Activated B cell treated with CpG ODN at 0.5 μM for 24 hours (primary cell): ENCODE measurements at regions of chr5 and their contacts with region 1.

Region 1: DNA sequence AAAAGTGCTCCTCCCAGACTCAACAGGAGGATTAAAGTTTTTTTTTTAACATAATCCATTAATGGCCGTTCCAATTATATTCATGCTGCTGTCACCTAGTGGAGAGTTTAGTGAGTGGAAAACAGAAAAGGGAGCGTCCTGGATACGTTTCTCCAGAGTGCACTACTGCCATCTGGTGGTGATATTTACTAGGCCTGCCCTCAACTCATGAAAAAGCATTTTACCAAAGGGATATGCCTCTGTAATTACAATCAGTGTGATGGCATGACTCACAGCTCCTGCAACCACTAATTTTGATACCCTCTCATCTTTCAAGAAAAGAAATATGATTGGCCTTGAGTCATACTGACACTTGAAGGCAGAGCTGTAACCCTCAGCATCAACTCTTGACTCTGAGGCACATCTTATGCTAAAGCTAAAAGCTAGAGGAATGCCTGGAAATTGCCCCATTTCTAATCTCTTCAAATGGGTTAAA is 20.0 kb downstream of the MINAR2 start:
- DNase-seq: no peak
- ATAC-seq: peak; percentile 64
- H3K4me3 Mint-ChIP-seq: no peak overlapping the region
- H3K27ac Mint-ChIP-seq: no peak overlapping the region
- H3K4me1 Mint-ChIP-seq: peaks cover 2% of the 10 kb centered on the region
- H3K27me3 Mint-ChIP-seq: peaks cover 2% of the 10 kb centered on the region
- CTCF ChIP-seq: peak; percentile 37

Region 2: DNA sequence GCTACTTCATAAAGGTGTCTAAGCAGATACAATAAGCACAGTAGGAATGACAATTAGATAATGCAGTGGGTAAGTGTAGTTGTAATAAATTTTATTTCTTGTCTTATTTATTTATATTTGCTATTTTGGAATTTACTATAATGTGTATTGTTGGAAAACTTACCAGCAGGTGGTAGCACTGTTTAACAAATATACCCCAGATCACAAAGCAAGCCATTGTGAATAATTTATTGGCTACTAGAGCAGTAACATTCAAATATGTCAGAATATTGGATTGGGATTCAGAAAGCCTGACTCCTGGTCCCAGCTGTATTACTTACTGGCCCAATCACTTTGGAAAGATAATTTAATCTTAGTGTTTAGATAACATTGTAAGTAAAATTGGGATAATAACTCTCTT is 595.4 kb before region 1 on chr5:
- CTCF ChIA-PET with region 1: no interaction called
- POLR2A ChIA-PET with region 1: no interaction called
- intact Hi-C with region 1: loop called (anchors 5 kb)
- DNase-seq: no peak
- ATAC-seq: no peak
- H3K4me3 Mint-ChIP-seq: no peak overlapping the region
- H3K27ac Mint-ChIP-seq: no peak overlapping the region
- H3K4me1 Mint-ChIP-seq: no peaks in the 10 kb centered on the region
- H3K27me3 Mint-ChIP-seq: no peaks in the 10 kb centered on the region
- CTCF ChIP-seq: no peak

Region 3: GRCh38 chr5:129664337-129664937 is 103.5 kb before region 1 on chr5:
- CTCF ChIA-PET with region 1: interaction called, 3 read pairs
- POLR2A ChIA-PET with region 1: no interaction called
- intact Hi-C with region 1: loop called (anchors 5 kb)
- DNase-seq: no peak
- ATAC-seq: no peak
- H3K4me3 Mint-ChIP-seq: no peak overlapping the region
- H3K27ac Mint-ChIP-seq: no peak overlapping the region
- H3K4me1 Mint-ChIP-seq: no peaks in the 10 kb centered on the region
- H3K27me3 Mint-ChIP-seq: no peaks in the 10 kb centered on the region
- CTCF ChIP-seq: no peak

Region 4: DNA sequence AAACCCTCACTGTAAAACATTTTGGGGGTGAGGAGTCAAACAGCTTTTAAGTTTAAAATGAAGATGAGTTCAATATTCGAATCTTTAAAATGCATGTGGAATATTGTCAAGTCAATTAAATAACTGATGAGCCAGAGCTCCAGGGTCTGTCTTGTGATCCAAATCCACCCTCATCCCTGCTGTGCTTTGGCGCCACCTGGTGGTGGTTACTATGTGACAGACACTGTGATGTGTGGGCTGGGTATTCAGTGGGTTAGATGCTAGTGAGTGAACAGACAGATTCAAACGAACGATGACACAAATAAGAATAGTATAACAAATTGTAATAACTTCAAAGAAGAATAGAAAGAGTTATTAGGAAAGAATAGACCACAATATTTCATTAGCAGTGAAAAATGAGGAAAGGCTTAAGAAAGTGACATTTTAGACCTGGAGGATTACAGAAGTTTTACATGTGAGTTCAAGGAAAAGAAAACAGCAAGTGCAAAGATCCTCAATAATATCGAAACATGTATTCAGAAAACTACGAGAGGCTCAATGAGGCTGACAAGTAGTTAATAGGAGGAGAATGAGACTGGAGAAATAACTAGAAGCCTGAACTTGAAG is 84.9 kb after region 1 on chr5:
- CTCF ChIA-PET with region 1: interaction called, 14 read pairs
- POLR2A ChIA-PET with region 1: no interaction called
- intact Hi-C with region 1: loop called (anchors 2 kb)
- DNase-seq: peak; percentile 28
- ATAC-seq: peak; percentile 61
- H3K4me3 Mint-ChIP-seq: no peak overlapping the region
- H3K27ac Mint-ChIP-seq: no peak overlapping the region
- H3K4me1 Mint-ChIP-seq: no peaks in the 10 kb centered on the region
- H3K27me3 Mint-ChIP-seq: peaks cover 4% of the 10 kb centered on the region
- CTCF ChIP-seq: peak; percentile 51

Region 5: DNA sequence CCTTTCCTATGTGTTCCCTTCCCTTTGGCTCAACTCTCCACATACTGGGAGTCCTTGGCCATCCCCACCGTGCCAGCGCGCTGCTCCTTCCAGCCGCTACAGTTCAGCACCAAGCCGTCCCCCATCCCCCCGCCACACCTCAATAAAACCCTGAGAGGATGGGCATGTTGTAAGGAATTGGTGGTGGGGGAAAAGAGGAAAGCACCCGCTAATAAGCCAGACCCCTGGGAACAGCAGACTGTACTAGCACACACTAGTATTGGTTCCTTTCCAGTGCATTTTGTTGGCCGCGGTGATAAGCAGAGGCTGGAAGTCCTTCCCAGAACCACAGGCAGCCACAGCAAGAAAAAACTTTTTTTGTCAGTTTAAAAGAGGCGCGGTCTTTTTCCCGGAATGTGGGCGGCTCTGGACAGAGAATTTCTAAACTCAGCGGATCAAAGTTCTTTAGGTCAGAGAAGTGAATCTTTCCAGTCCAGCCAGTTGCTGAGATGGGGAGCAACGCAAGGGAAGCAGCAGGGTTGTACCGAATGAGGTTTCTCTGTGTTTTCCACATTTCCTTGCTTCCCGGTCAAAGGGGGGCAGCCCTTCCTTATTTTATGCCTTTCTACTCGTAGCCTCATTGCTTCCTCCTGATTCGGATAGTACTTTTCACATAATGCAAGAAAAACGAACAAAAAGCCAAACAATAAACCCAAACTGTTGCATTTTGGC is 138.4 kb after region 1 on chr5:
- CTCF ChIA-PET with region 1: no interaction called
- POLR2A ChIA-PET with region 1: no interaction called
- intact Hi-C with region 1: no loop called
- DNase-seq: no peak
- ATAC-seq: no peak
- H3K4me3 Mint-ChIP-seq: peak overlapping the region; percentile 58
- H3K27ac Mint-ChIP-seq: no peak overlapping the region
- H3K4me1 Mint-ChIP-seq: peaks cover 15% of the 10 kb centered on the region
- H3K27me3 Mint-ChIP-seq: peaks cover 34% of the 10 kb centered on the region
- CTCF ChIP-seq: no peak

Region 6: GRCh38 chr5:130077007-130077406 is 309.1 kb after region 1 on chr5:
- CTCF ChIA-PET with region 1: no interaction called
- POLR2A ChIA-PET with region 1: no interaction called
- intact Hi-C with region 1: no loop called
- DNase-seq: no peak
- ATAC-seq: no peak
- H3K4me3 Mint-ChIP-seq: no peak overlapping the region
- H3K27ac Mint-ChIP-seq: no peak overlapping the region
- H3K4me1 Mint-ChIP-seq: no peaks in the 10 kb centered on the region
- H3K27me3 Mint-ChIP-seq: no peaks in the 10 kb centered on the region
- CTCF ChIP-seq: no peak